ENCODE measurements at regions of chr20 and their contacts with region 1.

Region 1: GRCh38 chr20:57596998-57597939 is 23.0 kb downstream of the ZBP1 start:
- DNase-seq: peak; percentile 75
- H3K4me3 ChIP-seq: no peak overlapping the region
- H3K27ac ChIP-seq: no peak overlapping the region
- H3K4me1 ChIP-seq: peaks cover 13% of the 10 kb centered on the region
- CTCF ChIP-seq: peak; percentile 91

Region 2: DNA sequence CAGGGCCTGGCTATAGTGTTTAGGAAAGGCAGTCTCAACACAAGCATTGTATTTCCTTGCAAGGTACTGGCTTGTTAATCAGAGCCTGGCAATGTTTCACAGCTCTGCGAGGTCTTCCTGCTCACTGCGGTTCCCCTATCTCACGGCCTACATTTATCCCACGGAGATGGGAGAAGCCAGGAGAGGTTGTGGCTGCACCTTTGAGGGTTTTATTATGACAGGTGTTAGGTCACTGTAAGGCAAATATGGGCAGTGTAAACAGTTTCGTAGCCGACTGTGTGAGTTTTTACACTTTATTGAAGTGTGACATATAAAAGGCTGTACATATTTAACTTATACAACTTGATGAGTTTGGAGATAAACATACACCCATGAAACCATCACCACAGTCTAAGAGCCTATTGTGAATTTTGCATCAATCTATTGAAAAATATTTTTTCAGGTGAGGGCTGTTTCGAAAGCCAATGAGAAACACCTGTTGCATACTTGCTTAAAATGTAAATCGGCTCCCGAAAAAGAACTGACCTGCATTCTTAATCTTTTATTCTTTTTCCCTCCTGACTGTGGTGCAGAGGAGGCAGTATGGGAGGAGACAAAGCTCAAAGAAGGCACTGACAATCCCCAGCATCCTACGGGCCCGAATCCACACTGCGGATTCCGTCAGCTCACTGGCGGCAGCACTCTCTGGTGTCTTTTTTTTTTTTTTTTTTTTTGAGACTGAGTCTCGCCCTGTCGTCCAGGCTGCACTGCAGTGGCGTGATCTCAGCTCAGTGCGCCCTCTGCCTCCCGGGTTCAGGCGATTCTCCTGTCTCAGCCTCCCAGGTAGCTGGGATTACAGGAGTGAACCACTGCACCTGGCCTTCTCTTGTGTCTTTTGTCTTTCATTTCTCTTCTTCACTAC is 213.6 kb before region 1 on chr20:
- CTCF ChIA-PET with region 1: interaction called, 3 read pairs
- POLR2A ChIA-PET with region 1: interaction called, 3 read pairs
- intact Hi-C with region 1: loop called (anchors 1 kb)
- DNase-seq: peak; percentile 58
- H3K4me3 ChIP-seq: peak overlapping the region; percentile 12
- H3K27ac ChIP-seq: peak overlapping the region; percentile 18
- H3K4me1 ChIP-seq: peaks cover 34% of the 10 kb centered on the region
- CTCF ChIP-seq: peak; percentile 64; the same call in 1 of the 2 replicates

Region 3: DNA sequence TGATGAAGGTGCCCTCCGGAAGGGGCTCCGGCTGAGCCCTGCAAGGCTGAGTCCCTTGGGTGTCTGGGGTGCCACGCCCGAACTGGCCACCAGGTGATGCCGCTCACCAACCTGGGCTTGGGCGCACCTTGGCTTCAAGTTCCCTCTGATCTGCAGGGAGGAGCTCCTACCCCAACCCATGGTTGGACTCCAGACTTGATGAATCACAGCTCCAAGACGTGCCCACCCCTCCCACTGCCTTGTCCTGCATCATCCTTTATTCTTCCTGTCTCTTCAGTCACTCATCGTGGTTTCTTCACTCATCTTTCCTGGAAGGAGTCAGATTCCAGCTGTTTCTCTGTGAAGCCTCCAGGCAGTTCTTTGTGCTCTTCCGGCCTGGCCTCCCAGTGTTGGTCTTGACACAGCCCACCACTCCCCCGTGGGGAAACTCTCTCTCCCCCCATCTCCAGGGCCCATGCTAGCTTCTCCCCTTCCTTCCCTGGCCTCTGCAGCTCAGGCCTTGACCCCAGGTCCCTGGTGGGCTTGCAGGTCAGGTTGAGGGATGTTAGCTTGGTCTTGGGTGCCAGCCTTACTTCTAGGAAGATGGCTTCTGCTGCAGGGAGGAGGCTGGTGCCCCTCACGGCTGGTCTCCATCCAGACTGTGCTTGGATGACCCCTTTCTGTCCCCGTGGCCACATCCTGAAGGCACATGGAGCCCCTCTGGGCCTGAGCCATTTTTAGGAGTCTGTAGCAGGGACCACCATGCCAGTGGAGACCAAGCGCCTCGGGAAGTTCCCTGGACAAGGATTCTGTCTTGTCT is 25.5 kb after region 1 on chr20:
- CTCF ChIA-PET with region 1: interaction called, 3 read pairs
- POLR2A ChIA-PET with region 1: no interaction called
- intact Hi-C with region 1: loop called (anchors 1 kb)
- DNase-seq: peak; percentile 83
- H3K4me3 ChIP-seq: no peak overlapping the region
- H3K27ac ChIP-seq: no peak overlapping the region
- H3K4me1 ChIP-seq: peaks cover 62% of the 10 kb centered on the region
- CTCF ChIP-seq: peak; percentile 95

Region 4: DNA sequence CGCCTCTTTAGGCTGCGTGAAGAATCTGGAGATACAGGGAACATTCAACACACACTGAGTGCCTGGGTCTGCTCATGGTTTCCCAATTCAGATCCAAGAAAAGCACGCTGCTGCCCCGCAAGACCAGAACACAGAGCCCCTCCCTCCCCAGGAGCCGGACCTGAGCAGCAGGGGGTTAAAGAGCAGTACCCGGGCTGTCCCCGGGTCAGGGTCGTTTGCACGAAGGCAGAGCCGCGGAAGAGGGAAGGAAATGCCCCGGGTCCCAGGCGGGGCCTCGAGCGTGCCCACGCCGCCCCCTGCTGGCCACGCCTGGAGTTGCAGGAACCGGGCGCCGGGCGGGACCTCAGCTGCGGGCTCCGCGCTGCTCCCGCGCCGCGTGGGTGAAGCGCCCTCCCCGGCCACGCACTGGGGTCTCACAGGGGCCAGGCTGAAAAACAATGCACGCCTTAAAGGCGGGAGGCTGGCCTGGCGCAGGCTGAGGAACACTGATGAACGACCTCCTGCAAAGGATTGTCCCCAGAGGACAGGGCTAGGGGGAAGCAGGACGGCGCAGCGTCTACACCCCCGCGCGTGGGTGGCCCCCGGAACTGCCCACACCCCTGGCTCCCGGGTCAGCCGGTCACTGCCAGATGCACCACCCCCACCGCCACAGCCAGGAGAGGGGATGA is 582.3 kb after region 1 on chr20:
- CTCF ChIA-PET with region 1: no interaction called
- POLR2A ChIA-PET with region 1: no interaction called
- intact Hi-C with region 1: loop called (anchors 1 kb)
- DNase-seq: peak; percentile 67
- H3K4me3 ChIP-seq: peak overlapping the region; percentile 32
- H3K27ac ChIP-seq: no peak overlapping the region
- H3K4me1 ChIP-seq: peaks cover 4% of the 10 kb centered on the region
- CTCF ChIP-seq: peak; percentile 91

Measured in OCI-LY7 (cell line).